ENCODE measurements at regions of chr19 and their contacts with region 1.

Region 1: DNA sequence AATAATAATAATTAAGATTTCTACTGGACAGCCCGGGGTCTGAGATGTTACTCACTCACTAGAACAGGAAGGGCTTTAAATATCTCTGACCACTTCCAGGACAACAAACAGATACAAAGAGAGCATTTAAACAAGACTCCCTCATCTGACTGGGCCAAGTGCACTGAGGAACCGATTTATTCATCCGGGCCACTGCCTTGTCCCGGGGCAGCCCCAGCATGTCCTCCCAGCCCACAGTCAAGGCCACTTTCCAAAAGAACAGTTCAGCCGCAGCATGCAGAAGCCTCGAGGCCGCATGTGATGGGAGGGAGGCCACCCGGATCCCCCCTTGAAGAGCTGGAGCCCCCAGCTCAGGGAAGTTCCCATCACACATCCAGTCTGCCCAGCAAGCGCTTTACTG is 30.5 kb downstream of the MLLT1 start:
- DNase-seq: no peak
- H3K27ac ChIP-seq: 0 out of 2 replicates have a peak overlapping the region, but pooled peaks have one; percentile 23
- CTCF ChIP-seq: no peak

Region 2: GRCh38 chr19:6260912-6261650 is 11.8 kb after region 1 on chr19:
- CTCF ChIA-PET with region 1: interaction called, 4 read pairs
- POLR2A ChIA-PET with region 1: interaction called, 10 read pairs
- DNase-seq: peak; percentile 36
- H3K27ac ChIP-seq: peak overlapping the region; percentile 40
- CTCF ChIP-seq: peak; percentile 54